CD4-positive, alpha-beta memory T cell (primary cell): ENCODE measurements at regions of chr6 and their contacts with region 1.

Region 1: DNA sequence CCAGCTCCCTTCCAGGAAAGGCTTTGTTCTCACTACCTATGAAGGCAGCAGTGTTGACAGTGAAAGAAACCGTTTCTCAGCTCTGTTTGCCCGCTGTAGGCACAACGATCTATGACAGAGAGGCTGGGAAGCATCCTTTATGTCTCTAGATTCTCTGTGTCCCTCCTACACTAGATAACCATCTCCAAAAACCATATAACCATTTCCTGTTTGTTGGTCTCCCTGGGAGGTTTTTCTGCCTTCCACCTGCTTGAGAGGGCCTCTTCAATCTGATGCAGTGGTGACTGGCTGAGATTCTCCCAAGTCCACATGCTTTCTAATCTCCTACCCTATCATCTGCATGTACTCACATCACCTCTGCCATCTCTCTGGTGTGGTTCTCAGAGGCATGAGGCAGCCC is 32.0 kb upstream of the TMEM217 start:
- DNase-seq: peak; percentile 60 to 76 (median 67)
- H3K4me3 ChIP-seq: no peak overlapping the region
- H3K4me3 Mint-ChIP-seq: peak overlapping the region in 7 of 8 donors; percentile 23 to 65 (median 51)
- H3K27ac ChIP-seq: no peak overlapping the region
- H3K27ac Mint-ChIP-seq: peak overlapping the region; percentile 74 to 96 (median 83)
- H3K4me1 ChIP-seq: peaks cover 18% of the 10 kb centered on the region
- H3K4me1 Mint-ChIP-seq: peaks cover 18 to 42% (median 24%) of the 10 kb centered on the region in 4 donors
- H3K27me3 ChIP-seq: no peaks in the 10 kb centered on the region
- H3K27me3 Mint-ChIP-seq: no peaks in the 10 kb centered on the region

Region 2: DNA sequence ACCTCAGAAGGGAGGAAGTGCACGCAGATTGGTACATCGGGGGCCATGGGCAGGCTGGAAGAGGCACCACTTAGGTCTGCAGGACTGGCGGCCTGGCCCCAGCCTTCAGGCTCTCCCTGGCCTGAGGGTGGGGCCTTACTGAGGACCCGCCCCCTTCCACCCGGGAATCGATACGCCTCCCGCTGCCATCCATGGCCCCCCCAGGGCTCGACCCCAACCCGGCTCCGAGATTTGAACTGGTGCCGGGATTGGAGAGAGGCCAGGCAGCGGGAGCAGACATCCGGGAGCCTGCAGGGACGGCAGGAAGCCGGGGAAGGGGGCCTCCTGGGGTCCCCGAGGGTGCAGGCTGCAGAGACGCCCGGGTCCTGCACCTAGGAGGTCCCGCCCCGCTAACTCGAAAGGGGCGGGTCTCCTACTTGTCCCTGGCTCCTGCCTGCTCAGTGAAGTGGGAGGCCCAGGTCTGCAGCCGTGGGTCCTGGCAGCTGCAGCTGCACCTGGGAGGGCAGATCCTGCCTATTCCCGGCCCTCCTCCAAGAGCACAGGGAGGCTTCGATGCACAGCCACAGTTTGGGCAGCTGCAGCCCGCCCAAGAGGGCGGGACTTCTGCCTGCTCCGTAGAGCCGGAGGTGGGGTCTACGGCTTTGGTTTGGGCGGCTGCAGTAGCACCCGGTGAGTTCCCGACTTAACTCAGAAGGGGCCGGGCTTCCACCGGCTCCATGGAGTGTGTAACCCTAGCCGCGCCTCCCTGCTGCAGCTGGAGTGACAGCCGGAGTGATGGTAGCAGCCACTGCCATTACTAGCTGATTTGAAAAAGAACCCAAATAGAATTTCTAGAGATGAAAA is 67.6 kb before region 1 on chr6:
- CTCF ChIA-PET with region 1: no interaction called
- POLR2A ChIA-PET with region 1: no interaction called
- intact Hi-C with region 1: loop called (anchors 2 kb)
- DNase-seq: peak; percentile 54 to 80 (median 63)
- H3K4me3 ChIP-seq: peak overlapping the region; percentile 55 to 94
- H3K4me3 Mint-ChIP-seq: peak overlapping the region; percentile 85 to 91 (median 88)
- H3K27ac ChIP-seq: no peak overlapping the region
- H3K27ac Mint-ChIP-seq: peak overlapping the region in 5 of 7 donors; percentile 30 to 79 (median 52)
- H3K4me1 ChIP-seq: peaks cover 7% of the 10 kb centered on the region
- H3K4me1 Mint-ChIP-seq: peaks cover 7 to 13% (median 9%) of the 10 kb centered on the region in 4 donors
- H3K27me3 ChIP-seq: no peaks in the 10 kb centered on the region
- H3K27me3 Mint-ChIP-seq: peaks cover 0 to 2% of the 10 kb centered on the region in 2 donors

Region 3: DNA sequence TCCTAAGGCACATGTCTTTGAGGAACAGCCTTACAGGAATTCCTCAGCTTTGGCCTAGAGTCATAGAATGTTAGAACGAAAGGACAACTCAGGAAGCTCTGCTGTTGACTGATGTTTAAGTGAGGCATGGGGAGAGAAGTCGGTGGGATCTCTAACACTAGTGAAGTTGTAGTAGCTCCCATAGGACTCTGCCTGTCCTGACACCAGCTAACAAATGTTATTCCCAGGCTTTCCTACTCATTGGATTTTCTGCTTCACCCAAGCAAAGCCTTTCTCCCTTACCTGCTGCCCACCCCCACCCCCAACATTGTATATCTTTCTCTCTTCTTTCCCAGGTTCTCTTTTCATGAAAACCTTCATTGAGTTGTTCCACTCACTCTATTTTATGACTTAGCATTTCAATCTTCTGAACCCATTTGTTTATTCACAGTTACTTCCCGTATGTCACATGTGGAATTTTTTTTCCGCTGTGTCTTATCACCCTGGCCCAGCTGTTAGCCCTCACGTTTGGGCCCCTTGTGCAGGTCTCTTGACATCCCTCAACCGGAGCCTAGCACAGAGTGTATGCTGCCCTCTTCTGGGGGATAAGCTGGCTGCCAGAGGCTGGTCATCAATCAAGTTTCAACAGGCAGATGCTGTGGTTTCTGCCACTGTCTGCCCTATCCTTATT is 24.7 kb after region 1 on chr6:
- CTCF ChIA-PET with region 1: interaction called, 10 read pairs
- POLR2A ChIA-PET with region 1: interaction called, 3 read pairs
- intact Hi-C with region 1: no loop called
- DNase-seq: peak in 3 of 5 donors; percentile 19 to 30 (median 20)
- H3K4me3 ChIP-seq: no peak overlapping the region
- H3K4me3 Mint-ChIP-seq: no peak overlapping the region
- H3K27ac ChIP-seq: no peak overlapping the region
- H3K27ac Mint-ChIP-seq: peak overlapping the region in 5 of 7 donors; percentile 8 to 92 (median 36)
- H3K4me1 ChIP-seq: no peaks in the 10 kb centered on the region
- H3K4me1 Mint-ChIP-seq: peaks cover 0 to 4% (median 3%) of the 10 kb centered on the region in 4 donors
- H3K27me3 ChIP-seq: no peaks in the 10 kb centered on the region
- H3K27me3 Mint-ChIP-seq: no peaks in the 10 kb centered on the region